Activated T-helper 1 cell treated with anti-CD3 and anti-CD28 coated beads, Interleukin-12 subunit alpha, Interleukin-12 subunit beta, Interleukin-2, Interleukin-4 antibody, amounts not matched to agents 30 ng/mL and 10 ng/mL and 1 ng/mL, durations not matched to agents 14 hours and 24 hours and 36 hours (primary cell): ENCODE measurements at regions of chr1 and their contacts with region 1.

Region 1: GRCh38 chr1:20507564-20508410 is at the start of gene MUL1:
- DNase-seq: peak; percentile 91
- H3K4me3 Mint-ChIP-seq: peak within 1 kb of the TSS; percentile 93
- H3K27ac Mint-ChIP-seq: peak within 1 kb of the TSS; percentile 93
- H3K4me1 Mint-ChIP-seq: peaks cover 11% of the 10 kb centered on the region
- H3K27me3 Mint-ChIP-seq: peaks cover 4% of the 10 kb centered on the region
- total RNA-seq, gene MUL1: 22.0 and 22.8 TPM in 2 replicates

Region 2: GRCh38 chr1:19799877-19800804 is 707.6 kb before region 1 on chr1 and contains the start of gene TMCO4:
- intact Hi-C with region 1: loop called (anchors 5 kb)
- DNase-seq: peak; percentile 34
- H3K4me3 Mint-ChIP-seq: peak within 1 kb of the TSS; percentile 86
- H3K27ac Mint-ChIP-seq: peak within 1 kb of the TSS; percentile 91
- H3K4me1 Mint-ChIP-seq: peaks cover 28% of the 10 kb centered on the region
- H3K27me3 Mint-ChIP-seq: peaks cover 15% of the 10 kb centered on the region
- total RNA-seq, gene TMCO4: 14.0 and 15.1 TPM in 2 replicates

Region 3: DNA sequence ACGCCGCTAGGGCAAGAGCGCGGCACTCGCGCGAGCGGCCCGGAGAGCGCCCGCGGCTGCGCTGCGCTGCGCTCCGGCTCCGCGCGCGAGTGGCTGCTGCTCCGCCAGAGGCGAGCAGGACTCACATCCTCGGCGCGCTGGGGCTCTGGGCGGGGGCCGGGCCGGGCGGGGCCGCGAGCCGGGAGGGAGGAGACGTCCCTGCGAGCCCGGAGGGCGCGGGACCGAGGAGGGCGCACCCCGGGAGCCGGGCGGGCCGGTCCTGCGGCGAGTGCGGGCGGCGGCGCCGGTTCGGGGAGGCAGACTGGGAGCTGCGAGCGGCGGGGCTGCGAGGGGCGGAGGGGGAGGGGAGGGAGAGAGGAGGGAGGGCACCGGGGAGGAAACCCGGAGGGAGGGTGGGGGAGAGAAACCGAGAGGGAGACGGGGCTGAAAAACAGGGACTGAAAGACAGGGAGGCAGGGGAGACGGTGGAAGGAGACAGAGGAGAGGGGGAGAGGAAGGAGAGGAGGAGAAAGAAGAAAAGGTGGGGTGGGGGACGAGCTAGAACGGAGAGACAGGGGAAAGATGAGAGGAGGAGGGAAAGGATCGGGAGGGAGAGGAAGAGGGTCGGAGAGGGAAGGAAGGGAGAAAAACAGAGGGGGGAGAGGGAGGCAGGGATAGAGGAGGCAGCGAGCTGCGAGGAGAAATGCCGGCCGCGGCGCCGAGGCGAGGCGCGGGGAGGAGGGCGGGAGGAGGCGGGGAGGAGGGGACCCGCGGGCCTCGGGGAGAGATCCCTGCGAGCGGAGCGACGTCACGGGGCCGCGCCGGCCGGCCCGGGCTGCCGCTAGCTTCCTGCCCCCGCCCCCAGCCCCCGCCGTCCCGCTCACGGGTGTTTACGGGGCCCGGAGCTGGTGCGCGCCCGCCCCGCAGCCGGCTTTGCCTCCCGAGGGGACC is 22.0 kb before region 1 on chr1 and contains the start of gene CAMK2N1:
- intact Hi-C with region 1: loop called (anchors 1 kb)
- DNase-seq: peak; percentile 24
- H3K4me3 Mint-ChIP-seq: peak within 1 kb of the TSS; percentile 86
- H3K27ac Mint-ChIP-seq: peak within 1 kb of the TSS; percentile 65
- H3K4me1 Mint-ChIP-seq: no peaks in the 10 kb centered on the region
- H3K27me3 Mint-ChIP-seq: peaks cover 58% of the 10 kb centered on the region
- total RNA-seq, gene CAMK2N1: 1.8 and 1.9 TPM in 2 replicates

Region 4: GRCh38 chr1:20633190-20634064 is 125.6 kb after region 1 on chr1 and contains the start of gene PINK1:
- intact Hi-C with region 1: loop called (anchors 1 kb)
- DNase-seq: peak; percentile 85
- H3K4me3 Mint-ChIP-seq: peak within 1 kb of the TSS; percentile 83
- H3K27ac Mint-ChIP-seq: peak within 1 kb of the TSS; percentile 48
- H3K4me1 Mint-ChIP-seq: peaks cover 10% of the 10 kb centered on the region
- H3K27me3 Mint-ChIP-seq: peaks cover 1% of the 10 kb centered on the region
- total RNA-seq, gene PINK1: 2.6 and 3.3 TPM in 2 replicates